Endothelial cell of umbilical vein (primary cell): ENCODE measurements at regions of chr20 and their contacts with region 1.

Region 1: GRCh38 chr20:44576297-44576696 is 6.1 kb upstream of the PKIG start:
- DNase-seq: peak; percentile 76
- H3K4me3 ChIP-seq: no peak overlapping the region
- H3K27ac ChIP-seq: peak overlapping the region; percentile 61
- H3K4me1 ChIP-seq: peaks cover 53% of the 10 kb centered on the region
- H3K27me3 ChIP-seq: no peaks in the 10 kb centered on the region
- CTCF ChIP-seq: peak; percentile 35 to 51
- POLR2A ChIP-seq: no peak

Region 2: DNA sequence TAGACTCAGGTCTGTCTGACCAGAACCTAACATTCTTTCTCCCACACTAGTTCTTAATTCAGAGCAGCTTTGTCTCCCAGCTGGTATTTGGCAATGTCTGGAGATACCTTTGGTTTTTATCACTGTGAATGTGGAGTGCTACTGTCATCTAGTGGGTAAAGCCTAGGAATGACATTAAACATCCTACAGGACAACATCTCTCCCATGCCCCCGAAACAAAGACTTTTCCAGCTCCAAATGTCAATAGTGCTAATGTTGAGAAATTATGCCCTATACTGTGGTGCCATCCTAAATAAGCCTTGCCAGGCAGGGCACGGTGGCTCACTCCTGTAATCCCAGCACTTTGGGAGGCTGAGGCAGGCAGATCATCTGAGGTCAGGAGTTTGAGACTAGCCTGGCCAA is 104.8 kb before region 1 on chr20:
- CTCF ChIA-PET with region 1: no interaction called
- POLR2A ChIA-PET with region 1: no interaction called
- dilution Hi-C with region 1: no loop called
- intact Hi-C with region 1: no loop called
- DNase-seq: no peak
- H3K4me3 ChIP-seq: no peak overlapping the region
- H3K27ac ChIP-seq: no peak overlapping the region
- H3K4me1 ChIP-seq: peaks cover 9% of the 10 kb centered on the region
- H3K27me3 ChIP-seq: peaks cover 0 to 6% of the 10 kb centered on the region in 2 experiments
- CTCF ChIP-seq: peak in 1 of 2 donors; percentile 6
- POLR2A ChIP-seq: no peak

Region 3: GRCh38 chr20:44552950-44553908 is 23.1 kb before region 1 on chr20:
- CTCF ChIA-PET with region 1: interaction called, 16 read pairs
- POLR2A ChIA-PET with region 1: no interaction called
- dilution Hi-C with region 1: no loop called
- intact Hi-C with region 1: loop called (anchors 2 kb)
- DNase-seq: peak; percentile 92
- H3K4me3 ChIP-seq: no peak overlapping the region
- H3K27ac ChIP-seq: peak overlapping the region; percentile 85
- H3K4me1 ChIP-seq: peaks cover 37% of the 10 kb centered on the region
- H3K27me3 ChIP-seq: no peaks in the 10 kb centered on the region
- CTCF ChIP-seq: no peak
- POLR2A ChIP-seq: no peak

Region 4: GRCh38 chr20:44566013-44566412 is 10.3 kb before region 1 on chr20:
- CTCF ChIA-PET with region 1: interaction called, 6 read pairs
- POLR2A ChIA-PET with region 1: no interaction called
- dilution Hi-C with region 1: no loop called
- intact Hi-C with region 1: loop called (anchors 1 kb)
- DNase-seq: no peak
- H3K4me3 ChIP-seq: no peak overlapping the region
- H3K27ac ChIP-seq: no peak overlapping the region
- H3K4me1 ChIP-seq: no peaks in the 10 kb centered on the region
- H3K27me3 ChIP-seq: no peaks in the 10 kb centered on the region
- CTCF ChIP-seq: no peak
- POLR2A ChIP-seq: no peak

Region 5: DNA sequence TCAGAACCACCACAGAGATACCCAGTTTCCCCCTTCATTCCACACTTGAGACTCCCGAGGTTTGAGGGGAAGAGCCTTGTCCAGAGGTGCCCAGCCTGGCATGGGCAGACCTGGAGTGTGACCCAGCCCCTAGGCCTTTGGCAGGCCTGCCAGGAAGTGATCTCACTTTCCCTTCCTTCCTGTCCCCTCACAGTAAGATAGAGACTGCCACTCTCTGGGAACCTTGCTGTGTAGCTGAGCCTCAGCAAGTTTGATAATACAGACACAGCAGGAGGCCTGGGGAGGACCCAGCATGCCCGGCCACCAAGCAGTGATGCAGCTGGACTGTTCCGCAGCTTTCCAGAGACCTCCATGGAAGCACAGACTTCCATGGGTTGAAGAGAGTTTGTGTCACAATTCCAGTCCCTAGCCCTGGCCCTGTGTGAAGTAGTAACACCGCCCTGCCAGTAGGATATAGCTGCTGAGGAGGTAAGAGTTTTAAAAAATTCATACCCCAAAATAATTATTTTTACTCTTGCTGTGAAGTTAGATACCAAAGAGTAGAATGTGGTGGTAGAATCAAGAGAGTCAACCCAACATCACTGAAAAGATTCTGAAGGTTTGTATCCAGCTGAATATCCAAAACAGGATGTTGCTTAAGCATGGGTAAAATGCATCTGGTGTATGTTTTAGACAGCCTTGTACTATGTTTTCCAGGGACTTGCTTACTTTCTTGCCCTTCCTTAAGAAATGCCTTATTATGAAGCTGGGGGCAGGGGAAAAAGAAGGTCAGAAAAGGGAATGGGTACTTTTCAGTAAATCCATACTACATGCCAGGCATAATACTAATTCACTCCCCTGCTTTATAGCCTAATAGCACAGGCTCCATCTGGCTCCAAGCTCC is 22.4 kb after region 1 on chr20:
- CTCF ChIA-PET with region 1: interaction called, 24 read pairs
- POLR2A ChIA-PET with region 1: no interaction called
- dilution Hi-C with region 1: no loop called
- intact Hi-C with region 1: loop called (anchors 1 kb)
- DNase-seq: peak; percentile 71
- H3K4me3 ChIP-seq: no peak overlapping the region
- H3K27ac ChIP-seq: peak overlapping the region; percentile 81
- H3K4me1 ChIP-seq: peaks cover 79% of the 10 kb centered on the region
- H3K27me3 ChIP-seq: no peaks in the 10 kb centered on the region
- CTCF ChIP-seq: peak; percentile 13 to 24
- POLR2A ChIP-seq: no peak